Activated T-helper 2 cell treated with anti-CD3 and anti-CD28 coated beads, Interferon-gamma antibody, Interleukin-2, Interleukin-4, amounts not matched to agents 10 μg/mL and 5 μg/mL and 100 μg/mL, durations not matched to agents 14 hours and 24 hours and 36 hours (primary cell): ENCODE measurements at regions of chr1 and their contacts with region 1.

Region 1: GRCh38 chr1:40449684-40450494 is at the start of gene ZFP69B:
- DNase-seq: peak; percentile 86
- H3K4me3 Mint-ChIP-seq: peak within 1 kb of the TSS; percentile 82
- H3K27ac Mint-ChIP-seq: peak within 1 kb of the TSS; percentile 86
- H3K4me1 Mint-ChIP-seq: peaks cover 28% of the 10 kb centered on the region
- H3K27me3 Mint-ChIP-seq: no peaks in the 10 kb centered on the region
- total RNA-seq, gene ZFP69B: 4.7 and 5.4 TPM in 2 replicates

Region 2: DNA sequence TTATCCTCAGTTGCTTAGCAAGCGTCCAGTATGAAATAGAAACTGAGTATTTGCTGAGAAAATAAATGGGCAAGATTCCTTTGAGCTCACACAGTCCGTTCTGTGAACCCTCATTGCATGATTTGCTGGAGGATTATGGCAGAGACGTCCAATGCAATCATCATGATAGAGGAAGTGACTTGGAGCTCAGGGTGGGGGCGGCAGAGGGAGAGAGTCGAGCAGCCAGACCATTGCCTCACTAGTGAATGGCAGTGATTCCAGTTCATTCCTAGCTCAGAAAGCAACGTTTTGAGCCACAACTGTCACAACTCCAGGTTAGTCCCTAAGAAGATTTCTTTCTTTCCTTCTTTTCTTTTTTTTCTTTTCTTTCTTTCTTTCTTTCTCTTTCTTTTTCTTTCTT is 105.3 kb before region 1 on chr1:
- intact Hi-C with region 1: loop called (anchors 5 kb)
- DNase-seq: no peak
- H3K4me3 Mint-ChIP-seq: no peak overlapping the region
- H3K27ac Mint-ChIP-seq: peak overlapping the region; percentile 59
- H3K4me1 Mint-ChIP-seq: peaks cover 40% of the 10 kb centered on the region
- H3K27me3 Mint-ChIP-seq: no peaks in the 10 kb centered on the region

Region 3: DNA sequence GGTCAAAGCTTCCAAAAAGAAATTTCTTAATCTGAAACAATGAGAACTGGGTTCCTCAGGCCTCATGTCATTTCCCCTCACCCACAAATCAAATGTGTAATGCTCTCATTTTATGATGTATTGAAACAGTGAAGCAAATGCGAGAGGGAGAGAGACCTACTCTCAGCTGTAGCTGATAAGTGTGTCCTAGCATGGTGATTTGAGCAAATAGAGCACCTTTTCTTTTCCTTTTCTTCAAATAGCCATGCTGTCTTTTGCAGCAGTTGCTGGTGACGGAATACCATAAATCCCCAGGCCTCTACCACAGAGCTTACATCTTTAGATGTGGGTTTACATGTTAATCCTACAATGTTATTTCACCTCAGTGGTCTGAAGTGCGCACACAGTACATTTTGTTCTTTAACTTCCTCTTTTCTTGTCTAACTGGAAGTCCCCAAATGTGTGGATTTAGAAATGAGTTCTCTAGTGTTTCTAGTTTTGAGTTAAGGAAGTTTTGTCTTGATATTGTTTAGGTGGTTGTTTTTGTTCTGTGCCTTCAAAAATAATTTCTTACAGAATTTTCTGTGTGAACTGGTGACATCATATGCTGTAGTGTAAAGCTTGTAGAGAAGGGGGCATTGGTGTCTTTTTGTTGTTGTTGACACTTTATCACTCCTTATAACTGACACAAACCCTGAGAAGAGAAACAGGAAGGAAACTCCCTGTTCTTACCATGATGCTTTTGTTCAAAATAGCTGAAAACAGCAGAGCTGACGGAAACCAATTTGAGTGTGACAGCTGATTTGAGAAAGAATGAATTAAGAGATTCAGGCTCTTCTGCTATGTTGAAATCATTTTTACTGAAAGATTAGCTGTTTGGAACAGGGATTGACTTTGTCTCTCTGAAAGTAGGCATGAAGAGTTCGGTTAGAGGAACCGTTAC is 64.2 kb before region 1 on chr1:
- intact Hi-C with region 1: loop called (anchors 2 kb)
- DNase-seq: peak; percentile 59
- H3K4me3 Mint-ChIP-seq: peak overlapping the region; percentile 85
- H3K27ac Mint-ChIP-seq: peak overlapping the region; percentile 99
- H3K4me1 Mint-ChIP-seq: peaks cover 86% of the 10 kb centered on the region
- H3K27me3 Mint-ChIP-seq: no peaks in the 10 kb centered on the region

Region 4: GRCh38 chr1:40508375-40509341 is 58.8 kb after region 1 on chr1 and contains the start of gene EXO5:
- intact Hi-C with region 1: loop called (anchors 1 kb)
- DNase-seq: peak; percentile 82
- H3K4me3 Mint-ChIP-seq: peak within 1 kb of the TSS; percentile 83
- H3K27ac Mint-ChIP-seq: peak within 1 kb of the TSS; percentile 76
- H3K4me1 Mint-ChIP-seq: peaks cover 10% of the 10 kb centered on the region
- H3K27me3 Mint-ChIP-seq: no peaks in the 10 kb centered on the region
- total RNA-seq, gene EXO5: 11.9 and 13.6 TPM in 2 replicates

Region 5: DNA sequence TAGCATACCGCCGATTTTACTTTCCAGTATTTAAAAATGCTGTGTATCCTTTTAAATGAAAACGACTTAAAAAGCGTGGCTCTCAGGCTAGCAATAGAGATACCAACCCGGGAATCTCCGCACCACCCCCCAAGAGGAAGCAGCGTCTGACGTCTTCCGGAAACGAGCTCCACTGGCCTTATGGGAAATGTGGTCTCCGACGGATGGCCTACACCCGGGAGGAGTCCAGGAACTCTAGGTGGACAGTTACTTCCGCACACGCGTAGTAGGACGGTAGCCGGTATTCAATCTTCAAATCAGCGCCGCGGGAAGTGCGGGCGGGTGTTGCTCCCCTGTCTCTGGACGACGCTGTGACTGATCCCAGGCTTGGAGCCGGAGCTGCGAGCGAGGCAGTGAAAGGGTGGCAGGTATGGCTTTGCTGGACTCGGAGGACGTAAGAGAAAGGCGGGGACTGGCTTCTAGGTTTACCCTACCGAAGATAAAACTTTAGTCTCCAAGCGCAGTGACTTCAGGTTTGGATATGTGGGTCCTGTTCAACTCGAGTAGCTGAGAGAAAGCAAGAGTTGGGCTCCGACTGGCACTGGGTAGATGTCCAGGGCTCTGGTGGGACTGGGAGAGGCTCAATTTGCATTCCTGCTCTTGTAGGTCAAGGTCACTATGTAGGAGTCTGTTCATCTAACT is 81.6 kb after region 1 on chr1 and contains the start of gene ZNF684:
- intact Hi-C with region 1: loop called (anchors 1 kb)
- DNase-seq: peak; percentile 82
- H3K4me3 Mint-ChIP-seq: peak within 1 kb of the TSS; percentile 97
- H3K27ac Mint-ChIP-seq: peak within 1 kb of the TSS; percentile 91
- H3K4me1 Mint-ChIP-seq: peaks cover 20% of the 10 kb centered on the region
- H3K27me3 Mint-ChIP-seq: no peaks in the 10 kb centered on the region
- total RNA-seq, gene ZNF684: 4.1 and 4.8 TPM in 2 replicates

Region 6: DNA sequence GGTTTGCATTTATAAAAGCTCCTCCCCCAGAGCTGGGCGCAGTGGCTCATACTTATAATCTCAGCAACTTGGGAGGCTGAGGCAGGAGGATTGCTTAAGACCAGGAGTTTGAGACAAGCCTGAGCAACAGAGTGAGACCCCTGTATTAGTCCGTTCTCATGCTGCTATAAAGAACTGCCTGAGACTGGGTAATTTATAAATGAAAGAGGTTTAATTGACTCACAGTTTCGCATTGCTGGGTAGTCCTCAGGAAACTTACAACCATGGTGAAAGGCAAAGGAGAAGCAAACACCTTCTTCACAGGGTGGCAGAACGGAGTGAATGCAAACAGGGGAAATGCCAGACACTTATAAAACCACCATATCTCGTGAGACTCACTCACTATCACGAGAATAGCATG is 134.1 kb after region 1 on chr1:
- intact Hi-C with region 1: loop called (anchors 1 kb)
- DNase-seq: no peak
- H3K4me3 Mint-ChIP-seq: no peak overlapping the region
- H3K27ac Mint-ChIP-seq: no peak overlapping the region
- H3K4me1 Mint-ChIP-seq: peaks cover 8% of the 10 kb centered on the region
- H3K27me3 Mint-ChIP-seq: peaks cover 2% of the 10 kb centered on the region